Activated CD4-positive, alpha-beta memory T cell treated with anti-CD3 and anti-CD28 coated beads, Interleukin-2, amount 10 ng/mL, durations not matched to agents 7 days and 5 days (primary cell): ENCODE measurements at regions of chr10 and their contacts with region 1.

Region 1: GRCh38 chr10:101587725-101588653 is at the starts of genes DPCD and POLL:
- DNase-seq: peak; percentile 93
- H3K4me3 Mint-ChIP-seq: peak within 1 kb of the TSS; percentile 90
- H3K27ac Mint-ChIP-seq: peak within 1 kb of the TSS; percentile 74
- H3K4me1 Mint-ChIP-seq: peaks cover 24% of the 10 kb centered on the region
- H3K27me3 Mint-ChIP-seq: no peaks in the 10 kb centered on the region
- total RNA-seq, gene DPCD: 4.1 to 5.2 TPM
- total RNA-seq, gene POLL: 31.9 to 35.9 TPM

Region 2: DNA sequence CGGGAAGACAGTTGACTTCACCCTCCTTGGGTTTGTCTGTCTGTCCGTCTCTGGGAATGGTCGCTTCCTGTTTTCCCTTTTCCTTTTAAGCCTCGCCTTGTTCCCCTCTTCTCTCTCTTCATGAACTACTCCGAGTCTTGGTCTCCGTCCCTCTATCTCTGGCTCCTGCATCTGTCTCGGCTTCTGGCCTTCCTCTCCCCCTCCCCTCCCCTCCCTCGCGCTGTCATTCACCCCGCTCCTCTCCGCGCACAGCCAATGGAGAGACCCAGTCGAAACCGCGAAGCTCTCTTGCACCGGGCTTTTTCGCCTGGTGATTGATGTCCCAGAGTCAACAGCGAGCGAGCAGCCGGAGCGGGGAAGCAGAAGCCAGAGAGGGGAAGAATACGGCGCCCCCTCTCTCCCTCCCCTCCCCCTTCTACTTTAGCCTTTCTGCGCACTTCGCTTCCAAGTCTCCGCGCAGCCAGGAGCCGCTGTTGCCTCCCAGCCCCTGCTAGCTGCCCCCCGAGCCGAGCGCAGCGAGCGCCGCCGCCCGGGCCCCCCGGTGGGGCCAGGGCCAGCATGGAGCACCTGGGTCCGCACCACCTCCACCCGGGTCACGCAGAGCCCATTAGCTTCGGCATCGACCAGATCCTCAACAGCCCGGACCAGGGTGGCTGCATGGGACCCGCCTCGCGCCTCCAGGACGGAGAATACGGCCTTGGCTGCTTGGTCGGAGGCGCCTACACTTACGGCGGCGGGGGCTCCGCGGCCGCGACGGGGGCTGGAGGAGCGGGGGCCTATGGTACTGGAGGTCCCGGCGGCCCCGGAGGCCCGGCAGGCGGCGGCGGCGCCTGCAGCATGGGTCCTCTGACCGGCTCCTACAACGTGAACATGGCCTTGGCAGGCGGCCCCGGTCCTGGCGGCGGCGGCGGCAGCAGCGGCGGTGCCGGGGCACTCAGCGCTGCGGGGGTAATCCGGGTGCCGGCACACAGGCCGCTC is 456.7 kb before region 1 on chr10 and contains the start of gene TLX1:
- CTCF ChIA-PET with region 1: no interaction called
- POLR2A ChIA-PET with region 1: no interaction called
- DNase-seq: no peak
- H3K4me3 Mint-ChIP-seq: no peak within 1 kb of the TSS
- H3K27ac Mint-ChIP-seq: no peak within 1 kb of the TSS
- H3K4me1 Mint-ChIP-seq: peaks cover 22% of the 10 kb centered on the region
- H3K27me3 Mint-ChIP-seq: peaks cover 88% of the 10 kb centered on the region
- total RNA-seq, gene TLX1: not detected

Region 3: DNA sequence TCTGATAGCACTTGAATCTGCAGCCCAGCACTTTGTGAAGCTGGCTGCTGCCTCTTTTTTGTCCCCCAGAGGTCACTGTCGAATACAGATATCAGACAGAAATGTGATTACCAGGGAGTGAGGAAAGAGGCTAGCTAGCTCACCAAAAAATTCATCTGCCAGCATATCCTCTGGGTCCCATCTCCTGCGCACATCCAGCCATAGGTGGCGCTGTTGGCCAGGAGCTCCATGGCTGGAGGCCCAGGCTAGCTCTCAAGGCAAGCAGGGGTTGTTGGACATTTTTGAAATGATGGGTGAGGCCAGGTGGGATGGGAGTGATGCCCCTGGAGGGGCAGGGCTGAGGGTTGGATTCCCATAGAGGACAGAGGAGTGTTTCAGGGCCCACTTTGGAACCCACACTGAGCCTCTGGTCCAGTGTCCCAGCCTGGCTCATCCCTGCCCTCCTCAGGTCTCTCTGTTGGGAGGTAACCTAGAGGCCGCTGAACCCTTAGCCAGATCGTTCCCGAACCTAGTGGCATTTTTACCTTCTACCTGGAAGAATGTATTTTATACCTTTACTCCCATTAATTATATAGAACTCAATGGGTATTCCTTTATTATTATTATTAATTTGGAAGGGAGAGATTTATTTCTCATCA is 14.9 kb after region 1 on chr10:
- CTCF ChIA-PET with region 1: interaction called, 30 read pairs
- POLR2A ChIA-PET with region 1: interaction called, 3 read pairs
- DNase-seq: peak; percentile 81
- H3K4me3 Mint-ChIP-seq: no peak overlapping the region
- H3K27ac Mint-ChIP-seq: no peak overlapping the region
- H3K4me1 Mint-ChIP-seq: no peaks in the 10 kb centered on the region
- H3K27me3 Mint-ChIP-seq: no peaks in the 10 kb centered on the region